ENCODE measurements at regions of chr19 and their contacts with region 1.

Region 1: DNA sequence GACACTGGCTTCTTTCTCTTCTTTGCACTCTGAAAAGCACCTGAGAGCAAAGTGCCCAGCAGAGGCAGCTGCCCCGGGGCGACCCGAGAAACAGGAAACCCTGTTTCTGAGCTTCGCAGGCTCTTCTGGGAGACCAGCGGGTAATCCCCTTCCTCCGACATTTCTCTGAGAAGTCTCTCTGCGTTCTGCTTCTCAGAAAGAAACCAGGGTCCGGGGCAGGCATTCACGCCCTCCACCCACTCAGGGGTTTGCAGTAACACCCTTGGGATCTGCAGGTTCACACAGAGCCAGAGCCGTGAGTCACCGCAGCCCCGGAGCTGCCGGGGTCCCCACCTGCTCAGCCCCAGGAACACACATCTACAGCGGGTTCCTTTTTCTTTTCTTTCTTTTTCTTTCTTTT is 86.0 kb downstream of the GADD45B start:
- DNase-seq: peak; percentile 70
- ATAC-seq: peak; percentile 92
- H3K4me3 Mint-ChIP-seq: peak overlapping the region; percentile 87
- H3K27ac Mint-ChIP-seq: peak overlapping the region; percentile 94
- H3K4me1 Mint-ChIP-seq: peaks cover 60% of the 10 kb centered on the region
- H3K27me3 Mint-ChIP-seq: no peaks in the 10 kb centered on the region
- CTCF ChIP-seq: no peak

Region 2: GRCh38 chr19:2512523-2513431 is 49.1 kb before region 1 on chr19:
- CTCF ChIA-PET with region 1: no interaction called
- POLR2A ChIA-PET with region 1: interaction called, 5 read pairs
- intact Hi-C with region 1: loop called (anchors 5 kb)
- DNase-seq: no peak
- ATAC-seq: no peak
- H3K4me3 Mint-ChIP-seq: no peak overlapping the region
- H3K27ac Mint-ChIP-seq: no peak overlapping the region
- H3K4me1 Mint-ChIP-seq: peaks cover 22% of the 10 kb centered on the region
- H3K27me3 Mint-ChIP-seq: no peaks in the 10 kb centered on the region
- CTCF ChIP-seq: no peak

Region 3: DNA sequence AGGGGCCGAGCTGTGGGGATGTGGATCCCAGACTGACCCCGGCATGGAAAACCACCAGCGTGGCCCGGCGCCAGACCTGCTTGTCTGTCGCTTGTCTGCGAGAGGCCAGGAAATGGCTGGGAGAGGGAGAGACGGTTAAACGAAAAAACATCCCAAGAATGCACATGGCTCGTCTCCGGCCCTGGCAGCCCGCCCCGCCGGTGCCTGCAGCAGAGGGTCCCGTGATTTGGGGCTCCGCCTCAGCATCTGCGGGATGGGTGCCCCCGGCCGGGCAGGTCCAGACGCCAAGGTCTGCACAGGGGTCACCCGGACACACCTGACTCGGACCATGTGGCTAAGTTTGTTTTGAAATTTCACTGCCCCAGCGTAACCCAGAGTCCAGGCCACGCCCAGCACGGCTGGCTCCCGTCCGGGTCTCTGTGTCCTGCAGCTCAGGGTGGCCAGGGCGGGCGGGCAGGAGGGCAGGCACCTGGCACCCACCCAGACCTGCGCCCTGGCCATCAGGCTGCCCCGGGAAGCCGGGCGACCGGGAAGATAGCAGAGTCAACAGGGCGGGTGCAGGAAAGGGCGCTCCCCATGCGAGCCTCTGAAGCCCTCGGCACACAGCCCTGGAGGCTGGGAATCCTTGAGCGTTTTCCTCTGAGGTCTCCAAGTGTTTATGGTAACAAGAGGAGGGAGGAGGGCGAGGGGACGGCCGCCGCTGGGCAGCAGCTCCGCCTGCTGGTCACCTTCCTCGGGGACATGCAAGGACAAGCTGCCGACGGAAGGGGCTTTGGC is 17.2 kb after region 1 on chr19:
- CTCF ChIA-PET with region 1: interaction called, 4 read pairs
- POLR2A ChIA-PET with region 1: interaction called, 10 read pairs
- intact Hi-C with region 1: no loop called
- DNase-seq: peak; percentile 45
- ATAC-seq: peak; percentile 66
- H3K4me3 Mint-ChIP-seq: peak overlapping the region; percentile 7
- H3K27ac Mint-ChIP-seq: no peak overlapping the region
- H3K4me1 Mint-ChIP-seq: peaks cover 14% of the 10 kb centered on the region
- H3K27me3 Mint-ChIP-seq: no peaks in the 10 kb centered on the region
- CTCF ChIP-seq: no peak

Region 4: DNA sequence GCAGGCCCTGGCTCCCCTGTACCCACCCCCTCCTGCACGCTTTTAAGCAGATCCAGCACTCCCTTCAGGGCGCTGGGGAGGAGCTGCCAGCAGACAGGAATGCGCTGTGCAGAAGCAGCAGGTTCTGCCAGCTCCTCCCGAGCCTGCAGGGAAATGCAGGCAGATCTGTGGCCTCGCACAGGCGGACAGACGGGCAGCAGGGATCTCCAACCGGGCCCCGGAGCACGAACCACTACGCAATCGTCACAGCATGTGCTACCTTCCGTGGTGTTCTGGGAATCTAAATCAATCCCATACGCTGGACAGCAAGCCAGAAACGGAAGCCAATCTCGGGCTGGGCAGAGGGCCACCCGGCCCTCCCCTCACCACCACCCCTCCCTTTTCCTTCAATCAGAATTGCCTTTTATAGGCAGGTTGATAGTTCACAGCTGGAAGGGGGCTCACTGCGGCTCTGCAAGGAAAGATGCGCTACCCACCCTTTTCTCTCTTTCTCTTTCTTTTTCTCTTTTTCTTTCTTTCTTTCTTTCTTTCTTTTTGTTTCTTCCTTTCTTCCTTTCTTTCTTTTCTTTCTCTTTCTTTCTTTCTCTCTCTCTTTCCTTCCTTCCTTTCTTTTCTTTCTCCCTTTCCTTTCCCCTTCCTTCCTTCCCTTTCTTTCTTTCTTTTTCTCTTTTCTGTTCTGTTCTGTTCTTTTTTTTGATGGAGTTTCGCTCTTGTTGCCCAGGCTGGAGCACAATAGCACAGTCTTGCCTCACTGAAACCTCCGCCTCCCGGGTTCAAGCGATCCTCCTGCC is 40.7 kb after region 1 on chr19:
- CTCF ChIA-PET with region 1: interaction called, 3 read pairs
- POLR2A ChIA-PET with region 1: interaction called, 47 read pairs
- intact Hi-C with region 1: loop called (anchors 2 kb)
- DNase-seq: no peak
- ATAC-seq: no peak
- H3K4me3 Mint-ChIP-seq: no peak overlapping the region
- H3K27ac Mint-ChIP-seq: no peak overlapping the region
- H3K4me1 Mint-ChIP-seq: peaks cover 56% of the 10 kb centered on the region
- H3K27me3 Mint-ChIP-seq: no peaks in the 10 kb centered on the region
- CTCF ChIP-seq: no peak

Region 5: DNA sequence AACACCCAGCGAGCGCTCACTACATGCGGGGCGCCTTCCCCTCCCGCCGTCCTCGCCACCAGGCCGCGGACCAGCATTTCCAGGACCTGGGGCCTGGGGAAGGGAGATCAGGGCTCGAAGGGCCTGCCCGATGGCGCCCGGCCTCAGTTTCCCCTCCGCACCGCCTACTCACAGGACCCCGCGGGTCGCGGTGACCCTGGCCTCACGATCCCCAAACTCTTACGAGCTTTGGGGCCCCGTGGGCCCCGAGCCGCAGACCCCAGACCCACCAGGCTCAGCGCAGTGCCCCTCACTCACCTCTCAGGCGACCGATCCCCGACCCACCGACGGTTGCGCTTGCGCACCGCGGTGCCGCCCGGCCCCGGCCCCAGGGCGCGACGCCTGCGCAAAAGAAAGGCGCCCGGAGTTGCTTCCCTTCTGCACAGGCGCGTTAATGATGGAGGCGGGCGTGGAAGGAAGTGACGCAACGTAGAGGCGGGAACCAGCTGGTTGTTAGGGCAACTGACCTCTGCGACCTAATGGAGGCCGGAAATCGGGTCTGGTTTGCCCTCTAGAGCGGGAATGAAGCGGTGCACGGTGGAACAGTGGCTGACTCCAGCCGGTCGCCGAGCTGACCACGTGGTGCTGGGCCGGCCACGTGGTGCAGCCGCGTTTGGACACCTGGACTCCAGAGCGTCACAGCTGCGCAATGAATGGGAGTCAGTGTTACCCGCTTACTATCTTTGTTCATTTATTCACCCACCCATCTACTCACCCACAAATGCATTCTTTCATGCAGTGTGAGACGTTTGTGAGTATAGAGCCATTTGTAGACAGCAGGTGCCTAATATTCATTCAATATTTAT is 221.3 kb after region 1 on chr19 and contains the start of gene SGTA:
- CTCF ChIA-PET with region 1: no interaction called
- POLR2A ChIA-PET with region 1: no interaction called
- intact Hi-C with region 1: no loop called
- DNase-seq: peak; percentile 90
- ATAC-seq: peak; percentile 65
- H3K4me3 Mint-ChIP-seq: peak within 1 kb of the TSS; percentile 86
- H3K27ac Mint-ChIP-seq: peak within 1 kb of the TSS; percentile 90
- H3K4me1 Mint-ChIP-seq: peaks cover 76% of the 10 kb centered on the region
- H3K27me3 Mint-ChIP-seq: no peaks in the 10 kb centered on the region
- CTCF ChIP-seq: no peak
- total RNA-seq, gene SGTA: 45.6 and 47.3 TPM in 2 replicates

Measured in activated B cell treated with CpG ODN at 0.5 μM for 24 hours (primary cell).